ENCODE measurements at regions of chr1 and their contacts with region 1.

Region 1: GRCh38 chr1:183622884-183623785 is 12.4 kb downstream of the ARPC5 start:
- DNase-seq: peak; percentile 62
- H3K4me3 ChIP-seq: no peak overlapping the region
- H3K27ac ChIP-seq: no peak overlapping the region
- H3K4me1 ChIP-seq: peaks cover 26% of the 10 kb centered on the region
- H3K27me3 ChIP-seq: no peaks in the 10 kb centered on the region
- CTCF ChIP-seq: peak; percentile 81 to 84

Region 2: GRCh38 chr1:183318433-183318832 is 304.7 kb before region 1 on chr1:
- CTCF ChIA-PET with region 1: no interaction called
- dilution Hi-C with region 1: no loop called
- in situ Hi-C with region 1: no loop called
- intact Hi-C with region 1: loop called (anchors 1 kb)
- DNase-seq: peak; percentile 88
- H3K4me3 ChIP-seq: no peak overlapping the region
- H3K27ac ChIP-seq: no peak overlapping the region
- H3K4me1 ChIP-seq: peaks cover 25% of the 10 kb centered on the region
- H3K27me3 ChIP-seq: no peaks in the 10 kb centered on the region
- CTCF ChIP-seq: peak; percentile 60 to 87

Region 3: GRCh38 chr1:183461350-183461749 is 161.8 kb before region 1 on chr1:
- CTCF ChIA-PET with region 1: no interaction called
- dilution Hi-C with region 1: no loop called
- in situ Hi-C with region 1: loop called in 1 of 2 experiments (anchors 10 kb)
- intact Hi-C with region 1: no loop called
- DNase-seq: peak; percentile 60
- H3K4me3 ChIP-seq: no peak overlapping the region
- H3K27ac ChIP-seq: peak overlapping the region; percentile 32
- H3K4me1 ChIP-seq: peaks cover 19% of the 10 kb centered on the region
- H3K27me3 ChIP-seq: no peaks in the 10 kb centered on the region
- CTCF ChIP-seq: no peak

Region 4: DNA sequence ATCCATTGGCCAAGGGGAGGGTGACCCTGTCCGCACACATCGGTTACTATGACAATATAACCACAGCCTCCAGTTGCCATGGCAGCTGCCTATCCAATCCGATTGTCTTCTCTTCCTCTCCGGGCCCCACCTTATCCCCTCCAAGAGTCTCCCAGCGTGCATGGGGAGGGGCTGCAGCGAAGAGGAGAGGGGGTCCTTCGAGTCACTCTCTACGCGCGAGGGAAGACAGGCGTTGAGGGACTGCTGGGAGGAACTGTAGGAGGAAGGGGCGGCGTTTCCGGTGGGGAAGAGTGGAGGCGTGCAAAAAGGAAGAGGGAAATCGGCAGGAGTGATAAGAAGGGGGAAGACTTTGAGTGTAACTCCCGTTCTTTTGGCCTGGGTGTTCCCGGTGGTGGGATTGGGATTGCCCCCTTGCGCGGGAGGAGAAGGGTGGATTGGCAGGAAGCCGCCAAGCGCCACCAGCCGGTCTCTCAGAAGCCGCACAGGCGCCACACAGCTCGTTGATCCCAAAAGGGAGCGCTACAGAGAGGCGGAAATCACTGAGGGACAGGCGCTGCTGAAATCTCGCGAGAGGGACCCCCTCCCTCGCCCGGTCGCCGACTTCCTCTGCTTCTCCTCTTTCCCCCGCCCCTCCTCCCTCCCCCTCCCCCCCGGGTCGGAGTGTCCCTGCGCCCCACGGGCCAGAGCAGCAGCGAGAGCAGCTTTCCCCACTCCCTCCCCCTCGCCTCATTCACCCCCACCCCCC is 151.2 kb before region 1 on chr1:
- CTCF ChIA-PET with region 1: no interaction called
- dilution Hi-C with region 1: no loop called
- in situ Hi-C with region 1: loop called in 1 of 2 experiments (anchors 10 kb)
- intact Hi-C with region 1: loop called (anchors 1 kb)
- DNase-seq: peak; percentile 96
- H3K4me3 ChIP-seq: peak overlapping the region; percentile 88 to 99 (median 99)
- H3K27ac ChIP-seq: peak overlapping the region; percentile 96
- H3K4me1 ChIP-seq: peaks cover 25% of the 10 kb centered on the region
- H3K27me3 ChIP-seq: no peaks in the 10 kb centered on the region
- CTCF ChIP-seq: no peak

Region 5: DNA sequence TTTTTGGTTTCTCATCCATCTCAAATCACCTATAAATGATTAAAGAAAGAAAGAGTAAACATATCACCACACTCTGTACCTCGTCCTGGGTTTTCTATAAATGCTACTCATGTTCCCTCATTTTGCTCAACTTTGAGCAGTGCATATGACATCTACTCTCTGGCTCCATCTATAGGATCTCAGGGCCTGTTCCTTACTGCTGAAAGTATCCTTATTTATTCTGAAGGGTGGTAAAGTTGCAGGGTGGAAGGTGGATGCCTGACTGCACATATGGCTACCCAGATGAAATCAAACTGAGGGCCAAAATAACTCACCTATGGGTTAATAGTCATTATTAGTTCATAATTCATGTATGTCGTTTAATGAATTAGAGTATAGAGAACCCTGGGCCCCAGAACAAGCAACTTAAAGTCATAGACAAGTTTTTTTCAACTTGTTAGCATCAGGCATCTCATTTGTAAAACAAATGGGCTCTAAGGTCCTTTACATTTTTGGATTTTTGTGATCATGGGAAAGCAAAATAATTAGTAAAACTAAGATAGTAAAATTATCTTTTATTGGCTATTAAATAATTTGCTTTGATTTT is 79.4 kb before region 1 on chr1:
- CTCF ChIA-PET with region 1: no interaction called
- dilution Hi-C with region 1: no loop called
- in situ Hi-C with region 1: no loop called
- intact Hi-C with region 1: loop called (anchors 1 kb)
- DNase-seq: peak; percentile 55
- H3K4me3 ChIP-seq: no peak overlapping the region
- H3K27ac ChIP-seq: no peak overlapping the region
- H3K4me1 ChIP-seq: no peaks in the 10 kb centered on the region
- H3K27me3 ChIP-seq: no peaks in the 10 kb centered on the region
- CTCF ChIP-seq: peak; percentile 75 to 78

Region 6: DNA sequence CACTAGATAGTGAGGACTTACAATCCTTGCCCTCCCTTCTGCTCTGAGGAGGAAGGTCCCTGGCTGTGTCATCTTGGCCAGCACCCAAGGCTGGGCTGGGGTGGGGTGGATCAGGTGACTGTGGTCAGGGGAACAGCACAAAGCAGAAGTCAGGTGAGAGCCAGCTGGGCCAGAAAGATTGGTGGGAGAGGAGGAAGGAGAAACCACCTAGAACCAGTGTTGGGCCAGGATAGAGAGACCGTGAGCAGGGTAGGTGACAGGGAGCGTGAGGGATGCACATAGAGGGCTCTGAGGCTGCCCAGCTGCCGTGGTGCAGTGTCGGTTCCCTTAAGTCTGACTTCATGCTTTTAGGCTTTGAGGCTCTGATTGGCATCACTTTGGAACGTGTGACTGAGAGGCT is 55.6 kb before region 1 on chr1:
- CTCF ChIA-PET with region 1: no interaction called
- dilution Hi-C with region 1: no loop called
- in situ Hi-C with region 1: no loop called
- intact Hi-C with region 1: loop called (anchors 2 kb)
- DNase-seq: peak; percentile 80
- H3K4me3 ChIP-seq: no peak overlapping the region
- H3K27ac ChIP-seq: no peak overlapping the region
- H3K4me1 ChIP-seq: peaks cover 7% of the 10 kb centered on the region
- H3K27me3 ChIP-seq: no peaks in the 10 kb centered on the region
- CTCF ChIP-seq: no peak

Region 7: GRCh38 chr1:183609313-183609712 is 13.8 kb before region 1 on chr1:
- CTCF ChIA-PET with region 1: interaction called, 8 read pairs
- dilution Hi-C with region 1: no loop called
- in situ Hi-C with region 1: no loop called
- intact Hi-C with region 1: loop called (anchors 2 kb)
- DNase-seq: peak; percentile 69
- H3K4me3 ChIP-seq: no peak overlapping the region
- H3K27ac ChIP-seq: peak overlapping the region; percentile 83
- H3K4me1 ChIP-seq: peaks cover 35% of the 10 kb centered on the region
- H3K27me3 ChIP-seq: no peaks in the 10 kb centered on the region
- CTCF ChIP-seq: peak; percentile 24 to 48

Region 8: GRCh38 chr1:183792300-183792699 is 169.2 kb after region 1 on chr1:
- CTCF ChIA-PET with region 1: no interaction called
- dilution Hi-C with region 1: no loop called
- in situ Hi-C with region 1: no loop called
- intact Hi-C with region 1: no loop called
- DNase-seq: no peak
- H3K4me3 ChIP-seq: no peak overlapping the region
- H3K27ac ChIP-seq: no peak overlapping the region
- H3K4me1 ChIP-seq: no peaks in the 10 kb centered on the region
- H3K27me3 ChIP-seq: peaks cover 2% of the 10 kb centered on the region
- CTCF ChIP-seq: no peak